ENCODE measurements at regions of chr5 and their contacts with region 1.

Region 1: GRCh38 chr5:56814963-56815658 is at the start of gene MAP3K1:
- DNase-seq: peak; percentile 83
- H3K4me3 Mint-ChIP-seq: peak within 1 kb of the TSS; percentile 86
- H3K27ac Mint-ChIP-seq: peak within 1 kb of the TSS; percentile 88
- H3K4me1 Mint-ChIP-seq: peaks cover 34% of the 10 kb centered on the region
- H3K27me3 Mint-ChIP-seq: no peaks in the 10 kb centered on the region
- total RNA-seq, gene MAP3K1: 20.5 to 20.6 TPM

Region 2: DNA sequence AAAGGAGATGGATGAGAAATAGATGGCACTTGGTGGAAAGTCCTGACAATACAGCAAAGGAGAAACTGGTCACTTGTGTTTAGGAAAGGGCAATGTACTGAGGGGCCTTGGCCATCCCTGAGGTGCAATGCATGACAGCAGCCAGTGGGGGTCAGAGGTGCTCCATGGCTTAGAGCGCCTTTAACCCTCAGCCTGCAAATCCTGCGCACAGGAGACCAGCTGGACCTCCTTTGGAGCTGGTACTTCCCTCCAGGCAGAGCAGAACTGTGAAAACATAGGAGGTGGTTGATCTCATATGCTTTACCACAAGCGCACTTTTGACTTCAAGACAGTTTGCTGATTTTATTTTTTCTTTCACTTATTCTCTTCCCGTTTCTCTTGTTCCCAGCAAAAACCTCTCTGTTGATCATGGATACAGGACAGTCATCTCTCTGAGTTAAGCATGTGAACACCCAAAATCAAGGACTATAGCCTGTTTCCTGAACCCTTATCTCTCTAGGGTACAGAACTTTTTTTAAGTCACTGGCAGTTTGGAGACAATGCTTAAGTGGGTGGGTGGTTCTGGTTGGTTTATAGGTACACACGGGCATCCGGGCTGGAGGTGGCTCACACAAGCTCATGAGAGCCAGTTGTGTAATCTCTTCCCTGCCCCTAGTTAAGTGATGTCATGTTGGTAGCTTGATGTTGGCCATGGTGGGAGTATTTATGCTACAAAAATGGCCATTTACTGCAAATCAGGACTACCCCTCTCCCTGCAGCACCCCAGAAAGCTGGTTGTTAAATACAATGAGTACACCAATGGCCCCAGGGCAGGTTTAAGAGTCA is 544.3 kb before region 1 on chr5:
- CTCF ChIA-PET with region 1: interaction called, 6 read pairs
- POLR2A ChIA-PET with region 1: no interaction called
- intact Hi-C with region 1: loop called (anchors 1 kb)
- DNase-seq: peak; percentile 89
- H3K4me3 Mint-ChIP-seq: peak overlapping the region; percentile 31
- H3K27ac Mint-ChIP-seq: peak overlapping the region; percentile 82
- H3K4me1 Mint-ChIP-seq: peaks cover 20% of the 10 kb centered on the region
- H3K27me3 Mint-ChIP-seq: no peaks in the 10 kb centered on the region

Region 3: GRCh38 chr5:56588636-56589480 is 226.3 kb before region 1 on chr5:
- CTCF ChIA-PET with region 1: no interaction called
- POLR2A ChIA-PET with region 1: no interaction called
- intact Hi-C with region 1: loop called (anchors 5 kb)
- DNase-seq: peak; percentile 65
- H3K4me3 Mint-ChIP-seq: no peak overlapping the region
- H3K27ac Mint-ChIP-seq: no peak overlapping the region
- H3K4me1 Mint-ChIP-seq: peaks cover 40% of the 10 kb centered on the region
- H3K27me3 Mint-ChIP-seq: no peaks in the 10 kb centered on the region

Region 4: DNA sequence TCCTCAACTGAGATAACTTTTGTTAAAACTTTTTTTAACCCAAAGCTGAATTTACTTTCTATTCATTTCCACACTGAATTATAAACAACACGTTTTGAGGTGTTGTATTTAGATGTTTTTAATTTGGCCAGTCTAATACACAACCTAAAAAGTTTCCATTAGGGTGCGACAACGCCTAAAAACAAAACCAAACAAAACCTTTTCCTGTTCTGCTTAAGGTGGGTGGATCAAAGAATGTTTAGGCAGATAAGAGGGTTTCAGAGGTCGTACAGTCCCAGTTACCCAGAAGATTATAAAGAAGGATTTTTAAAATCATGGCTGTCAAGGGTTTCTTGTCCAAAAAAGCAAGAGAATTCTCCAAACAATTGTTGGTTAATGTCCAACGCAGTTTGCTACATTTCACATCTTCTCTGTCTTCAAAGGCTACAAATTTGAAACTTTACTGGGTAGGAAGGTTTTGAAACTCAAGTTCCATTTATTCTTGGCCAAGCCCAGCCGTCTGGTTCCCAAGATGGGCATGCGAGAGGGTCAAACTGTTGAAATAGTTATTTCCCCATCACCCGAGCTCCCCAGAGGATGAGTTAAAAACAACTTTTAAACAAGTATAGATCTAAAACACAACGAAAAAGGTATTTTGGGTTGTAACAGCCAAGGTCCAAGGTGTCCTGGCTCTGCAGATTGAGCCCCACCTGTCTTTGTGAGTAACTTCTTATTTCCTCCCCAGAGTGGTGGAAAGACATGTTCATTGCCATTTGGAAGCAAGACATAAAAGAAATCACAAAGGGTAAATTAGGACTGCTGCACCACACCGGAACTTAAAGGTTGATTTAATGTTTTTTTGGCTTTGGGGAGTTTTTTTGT is 122.5 kb before region 1 on chr5:
- CTCF ChIA-PET with region 1: no interaction called
- POLR2A ChIA-PET with region 1: no interaction called
- intact Hi-C with region 1: loop called (anchors 5 kb)
- DNase-seq: no peak
- H3K4me3 Mint-ChIP-seq: peak overlapping the region; percentile 30
- H3K27ac Mint-ChIP-seq: peak overlapping the region; percentile 67
- H3K4me1 Mint-ChIP-seq: peaks cover 71% of the 10 kb centered on the region
- H3K27me3 Mint-ChIP-seq: no peaks in the 10 kb centered on the region

Region 5: DNA sequence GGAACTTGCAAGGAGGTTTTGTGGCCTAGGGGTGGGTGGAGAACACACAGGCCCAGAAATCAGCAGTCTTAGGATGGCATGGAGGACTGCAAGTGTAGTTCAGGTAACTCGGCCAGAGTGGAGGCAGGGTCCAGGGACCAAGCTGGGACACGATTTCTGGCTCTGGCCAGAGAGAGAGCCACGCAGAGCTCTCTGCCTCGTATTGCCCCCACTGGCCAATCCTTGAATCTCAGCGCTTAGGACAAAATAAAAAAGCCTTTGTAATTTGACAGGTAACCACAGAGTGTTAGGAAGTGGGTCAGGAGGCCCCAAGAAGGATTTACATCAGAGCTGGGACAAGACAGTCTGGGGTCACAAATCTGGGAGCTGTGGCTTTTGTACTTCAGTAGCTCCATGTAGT is 11.9 kb after region 1 on chr5:
- CTCF ChIA-PET with region 1: interaction called, 7 read pairs
- POLR2A ChIA-PET with region 1: no interaction called
- intact Hi-C with region 1: loop called (anchors 1 kb)
- DNase-seq: peak; percentile 25
- H3K4me3 Mint-ChIP-seq: peak overlapping the region; percentile 2
- H3K27ac Mint-ChIP-seq: peak overlapping the region; percentile 80
- H3K4me1 Mint-ChIP-seq: peaks cover 90% of the 10 kb centered on the region
- H3K27me3 Mint-ChIP-seq: no peaks in the 10 kb centered on the region

Region 6: DNA sequence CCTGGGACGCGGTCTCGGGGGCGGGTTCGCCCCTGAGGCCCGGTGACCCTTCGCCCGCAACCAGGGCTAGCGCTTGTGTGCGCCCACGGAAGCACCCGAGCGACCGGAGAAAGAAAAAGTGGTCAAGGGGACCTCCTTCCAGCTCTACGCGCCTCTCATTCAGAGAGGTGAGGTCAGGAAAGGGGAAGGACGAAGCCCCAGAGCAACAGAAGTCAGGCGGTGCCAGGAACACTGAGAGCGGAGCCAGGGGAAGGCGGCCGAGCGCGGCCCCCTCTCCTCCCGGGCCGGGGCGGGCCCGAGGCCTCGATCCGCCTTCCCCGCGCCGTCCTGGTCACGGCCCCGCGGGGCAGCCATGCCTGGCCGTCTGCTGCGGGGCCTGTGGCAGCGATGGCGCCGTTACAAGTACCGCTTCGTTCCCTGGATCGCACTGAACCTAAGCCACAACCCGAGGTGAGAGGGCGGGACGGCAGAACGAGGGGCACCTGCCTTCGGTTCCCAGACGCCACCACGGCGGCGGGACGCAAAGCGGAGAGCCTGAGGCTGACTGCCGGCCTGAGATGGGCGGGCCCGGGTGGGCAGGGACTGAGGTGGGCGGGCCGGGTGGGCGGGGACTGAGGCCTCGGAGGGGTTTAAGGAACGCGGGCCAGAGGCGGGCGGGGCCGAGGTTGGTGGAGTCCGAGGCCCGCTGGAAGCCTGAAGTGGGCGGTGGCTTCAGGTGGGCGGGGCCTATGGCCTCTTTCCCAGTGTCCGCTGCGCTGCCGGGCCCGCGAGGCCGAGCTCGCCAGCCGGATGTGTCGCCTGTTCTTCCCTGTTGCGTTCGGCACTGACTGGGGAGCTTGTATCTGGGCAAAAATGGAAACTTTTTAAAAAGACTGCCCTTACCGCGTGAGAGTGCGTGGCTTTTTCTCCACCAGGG is 94.4 kb after region 1 on chr5 and contains the start of gene SETD9:
- CTCF ChIA-PET with region 1: interaction called, 3 read pairs
- POLR2A ChIA-PET with region 1: no interaction called
- intact Hi-C with region 1: loop called (anchors 5 kb)
- DNase-seq: peak; percentile 97
- H3K4me3 Mint-ChIP-seq: peak within 1 kb of the TSS; percentile 77
- H3K27ac Mint-ChIP-seq: peak within 1 kb of the TSS; percentile 94
- H3K4me1 Mint-ChIP-seq: peaks cover 20% of the 10 kb centered on the region
- H3K27me3 Mint-ChIP-seq: no peaks in the 10 kb centered on the region
- total RNA-seq, gene SETD9: 5.1 to 7.4 TPM

Region 7: DNA sequence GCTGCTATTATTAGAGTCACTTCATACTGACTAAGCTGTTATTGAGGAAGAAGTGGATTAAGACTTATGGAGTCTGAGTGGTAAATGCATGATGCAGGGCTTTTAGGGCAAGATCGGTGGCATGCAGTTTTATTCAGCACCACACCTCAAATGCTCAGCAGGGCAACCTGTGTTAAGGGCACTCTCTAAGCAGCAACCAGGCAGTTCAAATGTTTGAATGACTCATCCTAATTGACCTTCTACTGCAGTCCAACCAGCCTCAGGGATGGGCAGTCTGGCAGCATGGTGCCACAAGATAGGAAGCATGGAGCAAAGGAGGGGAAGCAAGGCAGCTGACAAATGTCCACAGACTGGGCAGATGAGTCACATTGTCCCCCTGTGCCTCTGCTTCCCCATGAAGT is 217.0 kb after region 1 on chr5:
- CTCF ChIA-PET with region 1: no interaction called
- POLR2A ChIA-PET with region 1: no interaction called
- intact Hi-C with region 1: no loop called
- DNase-seq: no peak
- H3K4me3 Mint-ChIP-seq: no peak overlapping the region
- H3K27ac Mint-ChIP-seq: no peak overlapping the region
- H3K4me1 Mint-ChIP-seq: peaks cover 13% of the 10 kb centered on the region
- H3K27me3 Mint-ChIP-seq: peaks cover 3% of the 10 kb centered on the region

Region 8: DNA sequence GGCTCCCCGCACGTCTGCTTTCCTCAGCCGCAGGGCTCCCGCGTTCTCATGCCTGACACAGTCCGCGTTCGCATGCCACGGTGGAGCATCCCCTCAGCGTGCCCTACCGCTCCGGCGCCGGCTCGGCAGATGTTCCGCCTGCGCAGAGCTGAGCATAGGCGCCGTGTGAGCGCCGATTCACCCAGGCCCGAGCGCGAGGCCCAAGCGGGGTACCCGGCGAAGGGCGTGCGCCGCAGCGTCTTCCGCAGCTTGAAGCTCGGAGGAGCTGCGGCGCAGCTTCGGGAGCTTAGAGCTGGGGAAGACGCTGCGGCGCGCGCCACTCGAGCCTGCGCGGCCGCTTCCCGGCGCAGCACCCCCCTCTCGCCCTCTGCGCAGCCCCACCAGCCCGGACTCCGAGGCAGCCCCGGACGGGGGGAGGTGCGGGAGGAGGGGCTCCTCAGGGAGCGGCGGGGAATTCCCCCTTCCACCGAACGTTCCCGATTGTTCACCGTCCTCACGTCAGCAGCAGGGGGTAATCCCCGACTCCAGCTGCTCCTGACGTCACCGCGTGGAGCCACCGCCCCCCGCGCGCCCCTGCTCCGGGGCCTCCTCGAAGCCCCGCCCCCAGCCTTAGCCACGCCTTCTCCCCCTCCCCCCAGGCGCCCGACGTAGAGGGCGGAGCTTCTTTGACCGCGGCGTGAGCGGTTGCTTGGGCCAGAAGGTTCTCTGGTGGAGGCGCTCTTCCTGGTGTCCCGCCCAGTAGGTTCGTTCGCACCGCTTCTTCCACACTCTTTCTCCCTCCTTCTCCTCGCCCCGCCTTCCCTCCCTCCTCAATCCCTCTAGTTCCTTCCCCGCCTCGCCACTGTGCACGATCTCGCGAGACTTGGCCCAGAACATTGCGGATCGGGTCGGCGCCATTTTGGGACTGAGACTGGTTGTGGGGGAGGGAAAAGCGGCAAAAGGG is 358.3 kb after region 1 on chr5 and contains the start of gene GPBP1:
- CTCF ChIA-PET with region 1: no interaction called
- POLR2A ChIA-PET with region 1: no interaction called
- intact Hi-C with region 1: loop called (anchors 1 kb)
- DNase-seq: peak; percentile 98
- H3K4me3 Mint-ChIP-seq: peak within 1 kb of the TSS; percentile 86
- H3K27ac Mint-ChIP-seq: peak within 1 kb of the TSS; percentile 98
- H3K4me1 Mint-ChIP-seq: peaks cover 20% of the 10 kb centered on the region
- H3K27me3 Mint-ChIP-seq: no peaks in the 10 kb centered on the region
- total RNA-seq, gene GPBP1: 94.1 to 98.5 TPM

Measured in activated CD4-positive, alpha-beta memory T cell treated with anti-CD3 and anti-CD28 coated beads for 36 hours (primary cell).